ENCODE measurements at regions of chr15 and their contacts with region 1.

Region 1: DNA sequence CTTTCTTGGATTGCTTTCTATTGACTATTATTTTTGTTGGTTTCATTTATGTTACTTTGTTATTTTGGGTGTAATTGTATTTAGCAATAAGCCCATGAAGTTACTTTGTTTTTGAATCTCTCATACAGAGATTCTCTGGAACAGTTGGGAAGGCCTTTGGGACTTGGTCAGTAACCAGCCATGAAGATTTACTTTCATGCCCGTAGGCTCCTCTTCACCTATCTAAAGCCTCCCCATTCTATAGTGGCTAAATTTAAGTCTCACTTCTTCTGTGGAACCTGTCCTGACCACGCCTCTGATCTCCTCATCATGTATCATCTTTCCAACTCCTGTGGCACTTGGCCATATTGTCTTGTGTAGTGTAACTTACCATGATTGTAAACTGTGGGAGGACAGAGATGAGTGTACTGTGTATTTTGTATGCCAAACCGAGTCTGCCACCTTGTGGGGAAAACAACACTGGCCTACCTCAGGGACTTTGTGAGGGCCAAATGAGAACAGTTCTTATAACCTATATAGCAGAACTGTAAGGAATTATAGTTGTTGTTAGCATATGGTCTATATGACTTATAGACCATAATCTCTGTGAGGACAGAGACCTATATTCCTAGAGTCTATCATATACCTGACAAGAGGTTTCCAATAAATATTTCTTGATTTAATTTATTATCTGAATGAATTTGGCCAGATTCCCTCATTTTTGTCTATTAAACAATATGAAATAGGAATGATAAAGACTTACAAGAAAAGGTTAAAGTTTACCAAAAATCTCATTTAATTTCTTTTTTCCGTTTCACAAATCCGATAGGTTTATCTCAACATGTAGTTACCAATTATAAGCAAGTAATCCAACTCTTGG is 75.0 kb downstream of the STARD9 start:
- DNase-seq: peak in 2 of 3 donors; percentile 42 to 73
- ATAC-seq: peak; percentile 96 to 99 (median 98)
- H3K4me3 ChIP-seq: no peak overlapping the region
- H3K27ac ChIP-seq: no peak overlapping the region
- H3K4me1 ChIP-seq: peaks cover 0 to 10% (median 0%) of the 10 kb centered on the region in 4 donors
- H3K27me3 ChIP-seq: no peaks in the 10 kb centered on the region
- CTCF ChIP-seq: peak; percentile 68 to 93 (median 87)
- POLR2A ChIP-seq: no peak

Region 2: GRCh38 chr15:42581272-42581730 is 69.1 kb before region 1 on chr15:
- intact Hi-C with region 1: loop called in 1 of 2 experiments (anchors 10 kb)
- DNase-seq: peak; percentile 82 to 87 (median 87)
- ATAC-seq: peak; percentile 99 to 100 (median 99)
- H3K4me3 ChIP-seq: peak overlapping the region; percentile 27 to 44 (median 44)
- H3K27ac ChIP-seq: peak overlapping the region in 2 of 3 donors; percentile 11 to 29
- H3K4me1 ChIP-seq: peaks cover 0 to 8% (median 2%) of the 10 kb centered on the region in 4 donors
- H3K27me3 ChIP-seq: no peaks in the 10 kb centered on the region
- CTCF ChIP-seq: no peak
- POLR2A ChIP-seq: no peak

Region 3: DNA sequence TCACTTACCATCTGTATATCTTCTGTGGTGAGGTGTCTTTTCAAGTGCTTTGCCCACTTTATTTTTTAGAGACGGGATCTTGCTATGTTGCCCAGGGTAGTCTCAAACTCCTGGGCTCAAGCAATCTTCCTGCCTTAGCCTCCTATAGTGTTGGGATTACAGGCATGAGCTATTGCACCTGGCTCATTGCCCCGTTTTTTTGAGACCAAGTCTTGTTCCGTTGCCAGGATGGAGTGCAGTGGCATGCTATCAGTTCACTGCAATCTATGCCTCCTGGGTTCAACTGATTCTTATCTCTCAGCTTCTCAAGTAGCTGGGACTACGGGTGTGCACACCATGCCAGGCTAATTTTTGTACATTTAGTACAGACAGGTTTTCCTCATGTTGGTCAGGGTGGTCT is 322.7 kb after region 1 on chr15:
- intact Hi-C with region 1: no loop called
- DNase-seq: no peak
- ATAC-seq: peak; percentile 41 to 72 (median 58)
- H3K4me3 ChIP-seq: no peak overlapping the region
- H3K27ac ChIP-seq: no peak overlapping the region
- H3K4me1 ChIP-seq: peaks cover 0 to 30% (median 15%) of the 10 kb centered on the region in 4 donors
- H3K27me3 ChIP-seq: no peaks in the 10 kb centered on the region
- CTCF ChIP-seq: no peak
- POLR2A ChIP-seq: no peak

Measured in right lobe of liver (tissue), 6 donors.